ENCODE measurements at regions of chr6 and their contacts with region 1.

Region 1: GRCh38 chr6:42745707-42746462 is at the start of gene TBCC:
- DNase-seq: peak; percentile 98
- H3K4me3 ChIP-seq: peak within 1 kb of the TSS; percentile 99
- H3K27ac ChIP-seq: peak within 1 kb of the TSS; percentile 97
- H3K27me3 ChIP-seq: no peaks in the 10 kb centered on the region
- CTCF ChIP-seq: no peak
- polyA plus RNA-seq, gene TBCC: 19.6 and 21.7 TPM in 2 replicates

Region 2: DNA sequence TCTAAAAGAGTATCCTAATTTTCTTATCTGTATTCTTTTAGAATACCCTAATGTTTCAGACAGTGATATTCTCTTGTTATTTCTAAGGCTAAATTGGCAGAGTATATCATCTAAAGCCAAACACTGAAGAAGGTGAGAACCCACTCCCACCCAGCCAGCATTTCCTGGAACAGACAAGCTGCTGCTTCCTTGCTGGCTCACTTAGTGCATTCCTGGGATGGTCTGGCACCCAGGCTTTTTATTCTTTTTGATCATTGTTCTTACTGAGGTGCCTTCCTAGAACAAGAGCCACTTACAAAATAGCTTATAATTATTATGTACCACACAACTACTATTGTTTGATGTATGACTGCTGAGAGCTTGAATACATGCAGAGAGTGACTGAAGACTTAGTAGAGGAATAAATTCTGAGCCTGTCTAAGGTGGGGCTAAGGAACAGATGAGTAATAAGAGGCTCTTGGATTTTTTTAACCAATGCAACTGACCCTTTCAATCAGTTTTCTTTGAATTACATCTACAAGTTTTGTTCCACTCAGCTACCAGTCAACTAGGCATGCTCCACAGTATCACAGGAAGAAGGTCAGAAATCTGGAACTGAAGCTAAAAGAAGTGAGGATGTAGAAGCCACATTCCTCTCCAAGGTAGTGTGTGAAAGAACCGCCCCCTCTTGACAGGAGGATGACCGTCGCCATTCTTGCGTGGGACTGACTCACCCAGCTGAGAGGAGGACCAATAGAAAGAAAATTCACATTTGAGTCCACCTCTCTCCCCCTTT is 53.6 kb before region 1 on chr6:
- CTCF ChIA-PET with region 1: no interaction called
- POLR2A ChIA-PET with region 1: interaction called, 11 read pairs
- DNase-seq: no peak
- H3K4me3 ChIP-seq: no peak overlapping the region
- H3K27ac ChIP-seq: peak overlapping the region; percentile 47
- H3K27me3 ChIP-seq: no peaks in the 10 kb centered on the region
- CTCF ChIP-seq: no peak

Region 3: GRCh38 chr6:42726485-42727086 is 19.3 kb before region 1 on chr6:
- CTCF ChIA-PET with region 1: interaction called, 18 read pairs
- POLR2A ChIA-PET with region 1: interaction called, 6 read pairs
- DNase-seq: peak; percentile 87
- H3K4me3 ChIP-seq: peak overlapping the region; percentile 40
- H3K27ac ChIP-seq: peak overlapping the region; percentile 49
- H3K27me3 ChIP-seq: no peaks in the 10 kb centered on the region
- CTCF ChIP-seq: peak; percentile 93

Region 4: DNA sequence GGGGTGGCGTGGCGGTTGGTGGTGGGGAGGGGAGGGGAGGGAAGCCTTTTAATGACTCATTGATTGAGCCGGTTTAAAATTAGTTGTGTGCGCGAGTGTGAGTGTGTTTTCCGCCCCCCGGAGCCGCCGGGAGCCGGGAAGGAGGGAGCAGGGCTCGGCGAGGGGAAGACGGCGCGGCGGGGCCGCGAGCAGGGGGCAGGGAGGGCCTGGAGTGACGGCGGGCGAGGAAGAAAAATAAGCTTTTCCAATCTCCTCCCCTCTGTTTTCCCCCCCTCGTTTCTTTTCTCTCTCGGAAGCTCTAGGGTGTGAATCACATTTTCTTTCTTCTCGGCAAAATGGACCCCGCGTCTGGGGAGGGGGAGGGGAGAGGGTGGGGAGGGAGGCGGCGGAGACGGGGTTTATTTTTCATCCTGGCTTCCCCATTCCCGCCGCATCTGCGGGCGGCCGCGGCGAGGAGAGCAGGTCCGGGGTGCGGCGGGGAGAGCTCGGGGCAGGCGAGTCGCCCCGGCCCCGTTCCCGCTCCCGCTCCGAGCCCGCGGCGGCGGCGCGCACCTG is 36.8 kb after region 1 on chr6:
- CTCF ChIA-PET with region 1: interaction called, 4 read pairs
- POLR2A ChIA-PET with region 1: interaction called, 135 read pairs
- DNase-seq: peak; percentile 84
- H3K4me3 ChIP-seq: peak overlapping the region; percentile 81
- H3K27ac ChIP-seq: peak overlapping the region; percentile 96
- H3K27me3 ChIP-seq: no peaks in the 10 kb centered on the region
- CTCF ChIP-seq: no peak

Region 5: DNA sequence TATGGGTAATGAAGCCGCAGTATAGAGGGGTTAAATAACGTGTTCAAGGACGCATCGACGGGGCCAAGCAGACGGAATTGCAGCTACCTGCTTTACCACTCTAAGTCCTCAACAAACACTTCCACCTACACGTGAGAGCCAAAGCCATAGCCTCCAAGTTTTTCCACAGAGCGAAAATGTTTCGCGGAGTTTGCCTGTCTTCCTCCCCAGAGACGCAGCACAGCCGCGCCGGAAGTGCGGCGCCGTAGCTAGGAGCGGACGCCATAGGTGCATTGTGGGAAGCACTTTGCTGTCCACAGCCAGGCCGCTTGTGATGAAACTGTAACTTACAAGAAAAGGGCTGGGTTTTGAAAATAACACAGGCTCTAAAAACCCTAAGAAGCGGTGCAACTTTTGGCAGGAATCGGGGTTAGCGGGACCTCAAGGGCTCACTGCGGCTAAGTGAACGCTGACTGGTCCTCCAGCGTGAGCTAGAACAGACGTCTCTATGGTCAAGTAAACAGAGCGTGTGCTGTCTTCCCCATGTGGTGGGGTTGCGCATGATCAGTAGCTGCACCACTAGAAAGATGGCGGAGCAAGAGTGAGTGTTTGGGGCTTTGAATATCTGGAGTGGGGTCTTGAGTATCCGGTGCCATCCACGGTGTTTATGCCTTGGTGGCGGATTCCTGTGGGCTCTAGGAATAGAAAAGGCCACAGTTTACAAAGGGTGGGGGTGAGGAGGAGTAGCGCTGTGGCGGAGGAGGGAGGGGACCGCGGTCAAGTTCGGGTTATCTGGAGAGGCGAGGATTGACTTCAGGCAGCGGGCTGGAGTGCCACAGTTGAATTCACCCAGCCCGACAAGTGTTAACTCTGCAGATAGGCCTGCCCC is 133.7 kb after region 1 on chr6 and contains the start of gene RPL7L1:
- CTCF ChIA-PET with region 1: interaction called, 3 read pairs
- POLR2A ChIA-PET with region 1: interaction called, 11 read pairs
- DNase-seq: peak; percentile 69
- H3K4me3 ChIP-seq: peak within 1 kb of the TSS; percentile 91
- H3K27ac ChIP-seq: peak within 1 kb of the TSS; percentile 95
- H3K27me3 ChIP-seq: no peaks in the 10 kb centered on the region
- CTCF ChIP-seq: no peak; the same call in 1 of the 2 replicates
- polyA plus RNA-seq, gene RPL7L1: 45.0 and 48.5 TPM in 2 replicates

Region 6: DNA sequence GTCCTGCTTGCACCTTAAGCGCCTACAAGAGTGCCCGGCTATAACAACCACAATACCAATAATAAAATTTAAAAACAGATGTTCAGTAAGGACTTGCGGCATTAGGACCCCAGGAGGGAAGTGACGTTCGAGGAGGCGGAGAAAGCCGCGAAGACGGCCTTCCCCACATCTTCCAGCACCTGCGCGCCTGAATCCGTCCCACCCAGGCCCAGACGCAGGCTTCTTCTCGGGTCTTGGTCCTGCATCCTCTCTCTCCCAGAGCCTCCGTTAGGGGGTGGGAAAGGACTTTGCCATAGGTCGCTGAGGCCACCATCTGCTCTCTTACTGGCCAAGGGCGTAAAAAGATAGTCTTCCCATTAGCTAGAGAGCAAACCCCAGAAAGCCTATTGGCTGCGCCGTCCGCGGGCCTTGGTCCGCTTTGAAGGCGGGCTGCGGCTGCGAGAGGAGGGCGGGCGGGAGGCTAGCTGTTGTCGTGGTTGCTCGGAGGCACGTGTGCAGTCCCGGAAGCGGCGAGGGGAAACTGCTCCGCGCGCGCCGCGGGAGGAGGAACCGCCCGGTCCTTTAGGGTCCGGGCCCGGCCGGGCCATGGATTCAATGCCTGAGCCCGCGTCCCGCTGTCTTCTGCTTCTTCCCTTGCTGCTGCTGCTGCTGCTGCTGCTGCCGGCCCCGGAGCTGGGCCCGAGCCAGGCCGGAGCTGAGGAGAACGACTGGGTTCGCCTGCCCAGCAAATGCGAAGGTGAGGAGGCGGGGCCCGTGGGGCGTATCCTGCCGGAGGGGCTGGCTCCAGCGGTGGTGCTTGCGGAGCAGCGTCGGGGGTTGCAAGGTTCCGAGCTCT is 183.3 kb after region 1 on chr6 and contains the start of gene CNPY3:
- CTCF ChIA-PET with region 1: no interaction called
- POLR2A ChIA-PET with region 1: interaction called, 10 read pairs
- DNase-seq: peak; percentile 93
- H3K4me3 ChIP-seq: peak within 1 kb of the TSS; percentile 76
- H3K27ac ChIP-seq: peak within 1 kb of the TSS; percentile 96
- H3K27me3 ChIP-seq: peaks cover 2% of the 10 kb centered on the region
- CTCF ChIP-seq: no peak
- polyA plus RNA-seq, gene CNPY3: 38.4 and 39.2 TPM in 2 replicates